Endothelial cell of umbilical vein (primary cell): ENCODE measurements at regions of chr19 and their contacts with region 1.

Region 1: DNA sequence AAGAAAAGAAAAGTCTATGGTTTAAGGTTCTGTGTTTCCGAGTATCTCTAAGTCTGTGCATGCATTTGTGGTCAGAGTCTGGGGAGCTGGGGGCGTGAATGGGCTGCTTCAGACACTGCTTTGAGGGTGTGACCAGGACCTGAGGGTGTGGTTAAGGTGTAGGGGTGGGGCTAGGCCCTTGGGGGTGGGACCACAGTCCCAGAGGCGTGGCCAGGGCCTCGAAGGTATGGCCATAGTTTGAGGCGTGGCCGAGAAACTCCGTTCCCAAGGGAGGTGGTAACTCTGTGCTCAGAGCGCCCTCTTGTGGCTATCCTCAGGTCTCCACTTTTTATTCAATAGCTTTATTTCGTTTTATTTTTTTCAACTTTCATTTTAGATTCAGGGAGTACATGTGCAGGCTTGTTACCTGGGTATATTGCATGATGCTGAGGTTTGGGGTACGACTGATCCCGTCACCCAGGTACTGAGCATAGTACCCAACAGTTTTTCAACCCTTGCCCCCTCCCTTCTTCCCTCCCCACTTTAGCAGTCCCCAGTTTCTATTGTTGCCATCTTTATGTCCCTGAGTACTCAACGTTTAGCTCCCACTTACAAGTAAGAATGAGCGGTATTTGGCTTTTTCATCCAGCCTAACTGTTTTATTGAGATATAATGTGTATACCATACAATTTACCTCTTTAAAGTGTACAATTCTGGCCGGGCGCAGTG is 7.0 kb upstream of the CBLC start:
- DNase-seq: peak; percentile 95
- H3K4me3 ChIP-seq: no peak overlapping the region
- H3K27ac ChIP-seq: no peak overlapping the region
- H3K4me1 ChIP-seq: peaks cover 12% of the 10 kb centered on the region
- H3K27me3 ChIP-seq: no peaks in the 10 kb centered on the region
- CTCF ChIP-seq: peak; percentile 67 to 73
- POLR2A ChIP-seq: no peak

Region 2: DNA sequence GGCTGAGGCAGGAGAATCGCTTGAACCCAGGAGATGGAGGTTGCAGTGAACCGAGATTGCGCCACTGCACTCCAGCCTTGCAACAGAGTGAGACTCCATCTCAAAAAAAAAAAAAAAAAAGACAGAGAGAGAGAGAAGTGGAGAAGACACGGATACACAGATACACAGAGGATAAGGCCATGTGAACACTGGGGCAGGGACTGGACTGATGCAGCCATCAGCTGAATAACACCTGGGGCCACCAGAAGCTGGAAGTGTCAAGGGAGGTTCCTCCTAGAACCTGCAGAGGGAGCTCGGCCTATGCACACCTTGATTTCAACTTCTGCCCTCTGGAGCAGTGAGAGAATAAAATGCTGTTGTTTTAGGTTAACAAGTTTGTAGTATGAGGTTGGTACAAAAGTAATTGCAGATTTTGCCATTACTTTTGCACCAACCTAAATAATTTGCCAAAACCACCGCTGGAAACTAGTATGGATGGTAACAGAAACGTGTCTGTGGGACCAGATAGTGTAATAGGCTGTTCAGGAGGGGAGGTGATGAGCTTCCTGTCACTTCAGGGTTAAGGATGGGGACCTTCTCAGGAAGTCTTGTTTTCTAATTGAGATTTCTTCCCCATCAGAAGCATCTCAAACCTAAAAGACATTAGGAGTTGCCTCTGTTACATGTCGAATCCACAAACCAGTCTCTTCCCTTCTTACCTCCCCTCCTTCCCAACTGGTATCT is 193.7 kb before region 1 on chr19:
- CTCF ChIA-PET with region 1: interaction called, 81 read pairs
- POLR2A ChIA-PET with region 1: no interaction called
- dilution Hi-C with region 1: no loop called
- intact Hi-C with region 1: no loop called
- DNase-seq: peak; percentile 43
- H3K4me3 ChIP-seq: no peak overlapping the region
- H3K27ac ChIP-seq: no peak overlapping the region
- H3K4me1 ChIP-seq: no peaks in the 10 kb centered on the region
- H3K27me3 ChIP-seq: no peaks in the 10 kb centered on the region
- CTCF ChIP-seq: peak; percentile 38 to 68
- POLR2A ChIP-seq: no peak

Region 3: GRCh38 chr19:44653977-44654774 is 116.5 kb before region 1 on chr19:
- CTCF ChIA-PET with region 1: interaction called, 24 read pairs
- POLR2A ChIA-PET with region 1: no interaction called
- dilution Hi-C with region 1: no loop called
- intact Hi-C with region 1: loop called (anchors 1 kb)
- DNase-seq: peak; percentile 48
- H3K4me3 ChIP-seq: no peak overlapping the region
- H3K27ac ChIP-seq: no peak overlapping the region
- H3K4me1 ChIP-seq: no peaks in the 10 kb centered on the region
- H3K27me3 ChIP-seq: no peaks in the 10 kb centered on the region
- CTCF ChIP-seq: peak; percentile 62 to 76
- POLR2A ChIP-seq: no peak

Region 4: GRCh38 chr19:44712864-44713515 is 57.7 kb before region 1 on chr19:
- CTCF ChIA-PET with region 1: interaction called, 688 read pairs
- POLR2A ChIA-PET with region 1: no interaction called
- dilution Hi-C with region 1: no loop called
- intact Hi-C with region 1: no loop called
- DNase-seq: no peak
- H3K4me3 ChIP-seq: no peak overlapping the region
- H3K27ac ChIP-seq: no peak overlapping the region
- H3K4me1 ChIP-seq: peaks cover 12% of the 10 kb centered on the region
- H3K27me3 ChIP-seq: no peaks in the 10 kb centered on the region
- CTCF ChIP-seq: no peak
- POLR2A ChIP-seq: no peak

Region 5: DNA sequence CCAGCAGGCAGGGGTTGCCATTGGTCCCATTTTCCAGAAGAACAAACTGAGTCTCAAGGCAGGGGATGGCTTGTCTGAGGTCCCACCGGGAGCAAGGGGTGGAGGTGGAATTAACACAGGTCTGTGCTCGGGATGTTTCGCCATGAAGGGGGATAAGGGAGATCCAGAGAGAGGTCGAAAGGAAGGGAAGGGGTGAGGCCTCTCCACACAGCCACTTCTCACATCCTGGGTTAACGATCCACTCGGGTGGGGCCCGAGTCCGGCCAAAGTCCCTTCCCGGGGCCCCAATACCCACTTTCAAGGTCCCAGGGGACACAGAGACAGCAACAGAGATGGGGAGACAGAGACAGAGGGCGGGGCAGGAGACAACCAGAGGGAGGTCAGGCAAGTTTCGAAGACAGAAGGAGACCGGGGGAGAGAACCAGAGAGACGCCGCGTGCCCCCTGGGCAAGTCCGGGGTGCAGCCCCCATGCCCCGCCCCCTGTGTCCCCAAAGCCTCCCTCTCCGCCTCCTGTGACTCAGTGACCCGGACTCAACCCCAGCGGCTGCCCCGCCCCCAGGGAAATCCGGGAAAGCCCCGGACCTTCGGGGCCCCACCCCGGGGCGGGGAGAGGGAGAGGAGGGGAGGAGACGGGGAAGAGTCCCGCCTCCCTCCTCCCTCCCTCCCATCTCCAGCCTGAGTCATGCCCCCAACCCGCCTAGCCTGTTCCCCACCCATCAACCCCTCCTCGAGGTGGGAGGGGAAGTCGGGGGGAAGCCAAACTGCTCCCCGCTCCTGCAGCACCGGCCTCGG is 23.6 kb before region 1 on chr19:
- CTCF ChIA-PET with region 1: interaction called, 44 read pairs
- POLR2A ChIA-PET with region 1: no interaction called
- dilution Hi-C with region 1: no loop called
- intact Hi-C with region 1: loop called (anchors 1 kb)
- DNase-seq: peak; percentile 90
- H3K4me3 ChIP-seq: peak overlapping the region in 1 of 3 experiments; percentile 31
- H3K27ac ChIP-seq: peak overlapping the region; percentile 84
- H3K4me1 ChIP-seq: peaks cover 33% of the 10 kb centered on the region
- H3K27me3 ChIP-seq: no peaks in the 10 kb centered on the region
- CTCF ChIP-seq: no peak
- POLR2A ChIP-seq: peak; percentile 33

Region 6: GRCh38 chr19:44808463-44809371 is 38.0 kb after region 1 on chr19 and contains the start of gene BCAM:
- CTCF ChIA-PET with region 1: interaction called, 14 read pairs
- POLR2A ChIA-PET with region 1: no interaction called
- dilution Hi-C with region 1: no loop called
- intact Hi-C with region 1: no loop called
- DNase-seq: peak; percentile 49
- H3K4me3 ChIP-seq: peak within 1 kb of the TSS; percentile 60 to 66 (median 64)
- H3K27ac ChIP-seq: no peak within 1 kb of the TSS
- H3K4me1 ChIP-seq: peaks cover 16% of the 10 kb centered on the region
- H3K27me3 ChIP-seq: no peaks in the 10 kb centered on the region
- CTCF ChIP-seq: no peak
- POLR2A ChIP-seq: peak; percentile 68
- total RNA-seq, gene BCAM: 28.5 and 29.0 TPM in 2 replicates

Region 7: DNA sequence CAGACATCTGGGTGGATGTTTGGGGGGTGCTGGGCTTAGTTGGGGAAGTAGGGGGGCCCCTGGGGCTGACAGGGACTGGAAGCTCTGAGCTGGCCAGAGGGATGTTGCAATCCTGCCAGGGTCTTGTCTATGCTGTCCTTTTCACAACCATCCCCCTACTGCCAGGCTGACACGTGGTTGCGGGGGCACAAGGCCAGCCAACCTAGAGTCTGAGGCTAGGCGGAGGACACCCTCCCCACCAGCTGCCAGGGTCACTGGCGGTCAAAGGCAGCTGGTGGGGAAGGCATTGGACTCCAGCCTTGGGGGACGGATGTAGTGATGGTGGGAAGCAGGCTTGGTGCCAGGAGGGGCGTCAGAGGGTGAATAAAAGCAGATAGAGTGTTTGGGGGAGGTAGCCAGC is 142.2 kb after region 1 on chr19:
- CTCF ChIA-PET with region 1: no interaction called
- POLR2A ChIA-PET with region 1: no interaction called
- dilution Hi-C with region 1: no loop called
- intact Hi-C with region 1: no loop called
- DNase-seq: no peak
- H3K4me3 ChIP-seq: no peak overlapping the region
- H3K27ac ChIP-seq: no peak overlapping the region
- H3K4me1 ChIP-seq: peaks cover 10% of the 10 kb centered on the region
- H3K27me3 ChIP-seq: no peaks in the 10 kb centered on the region
- CTCF ChIP-seq: no peak
- POLR2A ChIP-seq: no peak